A673 (cell line): ENCODE measurements at regions of chr6 and their contacts with region 1.

Region 1: GRCh38 chr6:122372647-122373046 is 26.8 kb upstream of the HSF2 start:
- DNase-seq: peak; percentile 52
- H3K4me3 ChIP-seq: no peak overlapping the region
- H3K27ac ChIP-seq: no peak overlapping the region
- H3K4me1 ChIP-seq: no peaks in the 10 kb centered on the region
- H3K27me3 ChIP-seq: no peaks in the 10 kb centered on the region
- CTCF ChIP-seq: peak; percentile 62

Region 2: DNA sequence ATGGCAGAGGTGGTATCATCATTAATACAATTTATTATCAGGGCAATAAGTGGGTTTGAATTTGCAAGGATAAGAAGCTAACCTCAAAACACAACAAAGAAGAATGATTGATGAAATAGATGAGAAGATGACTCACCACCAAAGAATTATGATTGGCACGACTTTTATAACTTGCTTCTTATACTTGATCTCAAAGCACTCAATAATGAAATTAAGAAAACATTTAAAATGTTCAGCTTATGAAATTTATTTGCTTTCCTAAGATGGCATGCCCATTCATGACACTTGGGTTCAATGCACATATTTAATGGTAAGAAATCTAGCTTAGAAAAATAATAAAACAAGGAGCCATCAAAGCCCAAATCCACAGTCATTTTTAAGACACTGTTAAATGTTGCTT is 459.7 kb before region 1 on chr6:
- CTCF ChIA-PET with region 1: no interaction called
- POLR2A ChIA-PET with region 1: no interaction called
- intact Hi-C with region 1: no loop called
- DNase-seq: no peak
- H3K4me3 ChIP-seq: no peak overlapping the region
- H3K27ac ChIP-seq: no peak overlapping the region
- H3K4me1 ChIP-seq: no peaks in the 10 kb centered on the region
- H3K27me3 ChIP-seq: no peaks in the 10 kb centered on the region
- CTCF ChIP-seq: no peak

Region 3: GRCh38 chr6:122049341-122049740 is 323.3 kb before region 1 on chr6:
- CTCF ChIA-PET with region 1: interaction called, 6 read pairs
- POLR2A ChIA-PET with region 1: no interaction called
- intact Hi-C with region 1: loop called (anchors 10 kb)
- DNase-seq: peak; percentile 64
- H3K4me3 ChIP-seq: no peak overlapping the region
- H3K27ac ChIP-seq: no peak overlapping the region
- H3K4me1 ChIP-seq: peaks cover 8% of the 10 kb centered on the region
- H3K27me3 ChIP-seq: no peaks in the 10 kb centered on the region
- CTCF ChIP-seq: no peak

Region 4: DNA sequence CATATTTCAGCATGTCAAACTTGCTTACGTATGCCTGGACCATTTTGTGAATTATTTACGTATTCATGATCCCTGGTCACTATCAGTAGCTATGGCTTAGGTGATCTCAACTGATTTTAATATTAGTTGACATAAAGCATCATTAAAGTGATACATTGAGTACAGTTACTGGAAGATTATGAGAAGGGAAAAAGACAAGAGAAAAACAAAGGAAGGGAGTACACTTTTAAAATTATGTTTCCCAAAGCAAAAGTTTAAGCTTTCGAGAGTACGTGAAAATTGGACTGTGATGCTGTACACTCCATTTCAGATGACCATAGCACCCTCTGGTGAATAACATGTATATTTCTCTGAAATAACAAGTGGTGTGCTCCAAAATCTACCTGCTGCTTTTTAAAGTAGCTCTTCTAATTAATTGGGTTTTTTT is 188.2 kb before region 1 on chr6:
- CTCF ChIA-PET with region 1: no interaction called
- POLR2A ChIA-PET with region 1: no interaction called
- intact Hi-C with region 1: loop called (anchors 2 kb)
- DNase-seq: peak; percentile 27
- H3K4me3 ChIP-seq: peak overlapping the region; percentile 16
- H3K27ac ChIP-seq: no peak overlapping the region
- H3K4me1 ChIP-seq: no peaks in the 10 kb centered on the region
- H3K27me3 ChIP-seq: no peaks in the 10 kb centered on the region
- CTCF ChIP-seq: peak; percentile 66

Region 5: DNA sequence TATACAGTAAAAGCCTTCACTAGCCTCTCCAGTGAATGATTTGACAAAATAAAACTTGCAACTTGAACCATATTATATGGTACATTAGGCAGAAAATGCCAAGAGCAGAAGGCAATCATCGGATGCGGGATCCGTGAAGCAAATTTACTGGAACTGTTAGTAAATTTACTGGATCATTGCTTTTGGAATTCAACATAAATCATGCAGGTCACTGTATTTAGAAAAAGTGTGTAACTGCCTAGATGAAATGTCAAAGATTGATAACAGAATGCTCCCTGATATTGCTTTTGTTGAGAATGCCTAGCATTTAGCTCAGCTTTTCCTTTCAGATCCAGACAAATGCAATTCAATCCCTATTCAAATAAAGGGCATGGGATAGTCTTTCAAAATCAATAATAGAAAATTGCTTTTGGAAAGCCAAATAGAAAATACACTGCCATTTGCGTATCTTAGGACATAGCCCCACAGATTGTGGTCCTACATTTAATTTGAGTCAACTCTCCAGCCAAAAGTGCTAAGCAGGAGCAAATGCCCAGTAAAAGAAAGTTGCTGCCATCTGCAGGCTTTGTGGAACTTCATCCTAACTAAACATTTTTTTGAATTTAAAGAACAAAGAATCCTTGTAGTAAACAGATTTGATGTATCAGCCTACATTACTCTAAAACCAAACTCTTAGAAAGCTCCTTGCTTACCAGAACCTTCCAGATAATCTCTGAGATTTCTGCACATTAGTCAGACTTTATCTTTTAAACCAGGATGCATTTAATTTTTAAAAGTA is 82.7 kb before region 1 on chr6:
- CTCF ChIA-PET with region 1: no interaction called
- POLR2A ChIA-PET with region 1: interaction called, 15 read pairs
- intact Hi-C with region 1: no loop called
- DNase-seq: peak; percentile 51
- H3K4me3 ChIP-seq: no peak overlapping the region
- H3K27ac ChIP-seq: no peak overlapping the region
- H3K4me1 ChIP-seq: peaks cover 24% of the 10 kb centered on the region
- H3K27me3 ChIP-seq: no peaks in the 10 kb centered on the region
- CTCF ChIP-seq: peak; percentile 56